HEK293 (cell line): ENCODE measurements at regions of chr3 and their contacts with region 1.

Region 1: GRCh38 chr3:25648107-25648535 is 16.6 kb downstream of the TOP2B start:
- H3K4me3 ChIP-seq: no peak overlapping the region
- H3K27ac ChIP-seq: no peak overlapping the region
- H3K4me1 ChIP-seq: no peaks in the 10 kb centered on the region
- CTCF ChIP-seq: peak; percentile 73; the same call in 1 of the 2 replicates

Region 2: DNA sequence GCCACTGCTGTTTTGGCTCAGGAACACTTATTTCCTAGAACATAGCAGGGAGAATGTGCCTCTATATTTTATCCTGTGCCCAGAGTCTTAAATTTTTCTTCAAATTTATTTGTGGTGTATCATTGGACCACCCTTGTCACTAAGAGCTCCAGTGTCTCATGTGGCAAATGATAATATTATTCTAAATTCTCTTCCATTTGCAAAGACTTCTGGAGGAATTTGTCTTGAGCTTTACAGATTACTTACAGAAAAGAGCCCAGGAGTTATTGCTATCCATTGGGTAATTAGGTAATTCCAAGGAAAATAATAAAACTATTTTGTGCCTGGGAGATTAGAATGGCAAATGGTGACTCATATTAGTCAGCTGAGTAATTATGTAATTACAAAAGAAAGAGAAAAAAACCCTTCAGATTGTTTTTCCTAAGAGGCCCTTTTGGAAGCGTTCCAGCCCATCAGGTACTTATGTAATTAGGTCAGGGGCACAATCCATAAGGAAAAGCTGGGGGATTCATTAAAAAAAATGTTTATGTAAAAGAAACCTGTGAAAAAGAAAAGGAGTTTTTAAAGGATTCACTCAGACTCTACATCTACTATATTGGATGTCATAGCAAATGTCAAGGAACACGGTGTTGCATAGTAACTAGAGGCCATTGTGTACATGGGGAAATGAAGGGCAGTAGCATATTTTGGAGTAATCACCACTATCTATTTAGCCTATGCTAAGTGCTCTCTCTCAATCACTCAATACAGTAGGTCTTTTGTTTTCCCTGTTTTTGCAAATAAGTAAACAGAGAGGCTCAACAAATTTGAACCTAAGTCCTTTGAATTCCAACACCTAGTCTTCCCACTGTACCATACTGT is 601.0 kb before region 1 on chr3:
- CTCF ChIA-PET with region 1: no interaction called
- POLR2A ChIA-PET with region 1: no interaction called
- H3K4me3 ChIP-seq: no peak overlapping the region
- H3K27ac ChIP-seq: no peak overlapping the region
- H3K4me1 ChIP-seq: no peaks in the 10 kb centered on the region
- CTCF ChIP-seq: no peak

Region 3: GRCh38 chr3:25831578-25831977 is 183.5 kb after region 1 on chr3:
- CTCF ChIA-PET with region 1: interaction called, 15 read pairs
- POLR2A ChIA-PET with region 1: no interaction called
- H3K4me3 ChIP-seq: no peak overlapping the region
- H3K27ac ChIP-seq: no peak overlapping the region
- H3K4me1 ChIP-seq: no peaks in the 10 kb centered on the region
- CTCF ChIP-seq: no peak

Region 4: DNA sequence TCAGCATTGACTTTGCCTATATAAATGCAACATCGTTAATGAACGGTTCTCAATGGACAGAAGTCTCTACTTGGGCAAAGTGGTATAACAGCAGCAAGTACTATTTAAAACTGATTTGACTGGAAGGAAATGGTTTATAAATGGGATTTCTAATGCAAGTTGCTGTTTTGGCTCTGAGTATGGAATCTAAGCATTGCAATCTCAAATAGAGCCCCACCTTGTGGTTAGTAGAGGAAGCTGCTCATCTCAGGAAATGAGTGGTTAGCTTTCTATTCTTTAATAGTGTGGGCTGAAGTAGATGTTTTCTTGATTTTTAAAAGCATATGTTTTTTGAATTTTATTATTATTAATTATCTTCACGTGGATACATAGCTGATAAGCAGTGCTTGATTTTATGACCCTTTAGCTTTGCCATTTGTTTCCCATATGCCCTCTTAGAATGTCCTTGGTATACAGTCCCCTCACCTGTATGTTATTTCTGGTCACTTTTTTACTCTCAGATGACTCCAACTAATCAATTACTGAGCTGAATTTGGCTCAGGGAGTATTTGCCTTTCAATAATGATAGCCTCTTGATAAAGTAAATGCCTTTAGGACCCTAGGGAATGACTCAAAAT is 208.9 kb after region 1 on chr3:
- CTCF ChIA-PET with region 1: interaction called, 55 read pairs
- POLR2A ChIA-PET with region 1: no interaction called
- H3K4me3 ChIP-seq: no peak overlapping the region
- H3K27ac ChIP-seq: no peak overlapping the region
- H3K4me1 ChIP-seq: no peaks in the 10 kb centered on the region
- CTCF ChIP-seq: no peak

Region 5: GRCh38 chr3:25973122-25973521 is 325.0 kb after region 1 on chr3:
- CTCF ChIA-PET with region 1: no interaction called
- POLR2A ChIA-PET with region 1: no interaction called
- H3K4me3 ChIP-seq: no peak overlapping the region
- H3K27ac ChIP-seq: no peak overlapping the region
- H3K4me1 ChIP-seq: no peaks in the 10 kb centered on the region
- CTCF ChIP-seq: no peak